PC-9 (cell line): ENCODE measurements at regions of chr12 and their contacts with region 1.

Region 1: GRCh38 chr12:93569656-93570551 is 2.6 kb upstream of the SOCS2 start:
- DNase-seq: peak; percentile 79 to 83
- H3K4me3 ChIP-seq: peak overlapping the region; percentile 94
- H3K27ac ChIP-seq: peak overlapping the region; percentile 80
- H3K4me1 ChIP-seq: peaks cover 2% of the 10 kb centered on the region
- H3K27me3 ChIP-seq: no peaks in the 10 kb centered on the region
- CTCF ChIP-seq: peak; percentile 87

Region 2: GRCh38 chr12:93624595-93625294 is 54.8 kb after region 1 on chr12:
- CTCF ChIA-PET with region 1: no interaction called
- POLR2A ChIA-PET with region 1: no interaction called
- intact Hi-C with region 1: loop called (anchors 5 kb)
- DNase-seq: peak; percentile 24 to 95
- H3K4me3 ChIP-seq: no peak overlapping the region
- H3K27ac ChIP-seq: peak overlapping the region; percentile 94
- H3K4me1 ChIP-seq: peaks cover 26% of the 10 kb centered on the region
- H3K27me3 ChIP-seq: no peaks in the 10 kb centered on the region
- CTCF ChIP-seq: no peak

Region 3: DNA sequence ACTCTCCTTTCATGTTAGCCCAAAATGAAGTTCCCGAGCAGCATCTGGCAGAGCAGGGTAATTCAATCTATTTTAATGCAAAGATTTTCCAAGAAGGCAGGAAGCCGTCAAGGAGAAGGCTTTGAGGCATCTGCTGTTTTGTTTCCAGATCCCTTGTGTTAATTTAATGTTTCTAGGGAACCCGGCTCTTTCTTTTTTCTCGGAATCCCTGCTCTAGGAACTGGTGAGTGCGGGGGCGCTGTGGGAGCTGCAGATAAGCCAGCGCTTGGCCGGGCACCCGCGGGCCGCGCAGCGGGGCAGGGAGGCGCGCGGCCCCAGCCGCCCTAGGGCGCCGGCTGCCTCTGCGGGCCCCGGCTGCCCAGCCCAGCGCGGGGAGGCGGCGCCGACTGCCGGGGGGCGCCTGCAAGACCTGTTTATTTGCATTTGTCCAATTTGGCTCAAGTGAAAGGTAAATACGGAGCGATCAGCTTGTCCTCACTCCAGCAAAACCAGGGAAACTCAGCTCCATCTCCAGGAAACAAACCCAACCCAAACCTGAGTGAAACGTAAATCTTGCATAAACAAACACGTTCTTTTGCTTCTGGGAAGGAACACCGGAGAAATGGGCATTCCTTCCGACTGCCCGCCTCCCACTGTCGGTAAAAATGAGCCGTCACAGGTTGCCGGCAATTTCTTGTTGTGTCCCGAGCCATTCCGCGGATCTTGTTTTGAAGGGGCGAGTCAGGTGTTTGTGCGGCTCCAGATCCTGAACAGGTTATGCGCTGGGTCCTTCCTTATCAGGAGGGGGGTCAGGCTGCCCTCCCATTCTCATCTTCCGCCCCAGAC is 172.4 kb after region 1 on chr12:
- CTCF ChIA-PET with region 1: interaction called, 4 read pairs
- POLR2A ChIA-PET with region 1: no interaction called
- intact Hi-C with region 1: loop called (anchors 1 kb)
- DNase-seq: peak; percentile 72 to 73
- H3K4me3 ChIP-seq: peak overlapping the region; percentile 71
- H3K27ac ChIP-seq: peak overlapping the region; percentile 53
- H3K4me1 ChIP-seq: peaks cover 18% of the 10 kb centered on the region
- H3K27me3 ChIP-seq: no peaks in the 10 kb centered on the region
- CTCF ChIP-seq: peak; percentile 46; the same call in 1 of the 2 replicates

Region 4: GRCh38 chr12:93886533-93887511 is 316.9 kb after region 1 on chr12:
- CTCF ChIA-PET with region 1: no interaction called
- POLR2A ChIA-PET with region 1: no interaction called
- intact Hi-C with region 1: loop called (anchors 5 kb)
- DNase-seq: no peak
- H3K4me3 ChIP-seq: no peak overlapping the region
- H3K27ac ChIP-seq: no peak overlapping the region
- H3K4me1 ChIP-seq: peaks cover 8% of the 10 kb centered on the region
- H3K27me3 ChIP-seq: no peaks in the 10 kb centered on the region
- CTCF ChIP-seq: no peak

Region 5: DNA sequence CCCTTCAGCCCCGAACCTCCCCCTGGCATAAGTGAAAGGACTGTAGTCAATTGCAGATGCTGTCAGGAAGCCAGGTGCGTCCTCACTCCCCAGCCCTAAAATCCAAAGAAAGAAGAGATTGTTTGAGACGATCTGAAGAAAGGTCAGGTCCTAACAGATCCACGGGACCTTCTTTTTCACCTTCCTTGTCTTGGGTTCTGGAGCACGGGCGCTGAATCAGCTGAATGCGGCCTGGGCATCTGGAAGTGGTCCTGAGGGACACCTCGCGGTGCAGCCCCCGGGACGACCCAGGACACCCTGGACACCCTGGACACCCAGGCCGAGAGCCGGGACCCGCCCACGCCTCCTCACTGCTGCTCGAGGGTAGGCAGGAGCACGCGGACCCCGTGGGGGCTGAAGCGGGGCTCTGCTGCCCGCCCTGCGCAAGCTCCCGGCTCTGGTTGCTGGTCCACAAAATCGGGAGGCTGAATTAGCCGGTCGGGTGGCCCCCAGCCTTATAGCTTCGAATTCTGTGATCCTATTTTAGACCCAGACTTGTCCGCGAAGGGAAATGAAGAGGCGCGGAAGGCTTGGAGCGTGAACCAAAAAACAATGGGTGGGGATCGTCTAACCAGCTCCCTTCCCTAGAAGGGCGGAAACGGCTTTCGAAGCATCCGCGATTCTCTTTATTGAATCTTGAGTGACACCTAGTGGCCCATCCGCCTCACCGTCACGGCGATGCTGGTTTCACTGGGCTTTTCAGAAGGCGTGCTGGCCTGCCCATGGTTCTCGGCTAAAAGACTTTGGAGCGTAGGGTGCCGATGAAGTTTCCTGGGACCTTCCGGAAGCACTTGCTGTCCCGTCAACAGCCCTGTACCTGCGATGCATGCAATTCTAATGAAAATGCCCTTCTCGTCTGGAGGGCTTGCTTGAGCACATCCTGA is 532.1 kb after region 1 on chr12:
- CTCF ChIA-PET with region 1: interaction called, 15 read pairs
- POLR2A ChIA-PET with region 1: interaction called, 3 read pairs
- intact Hi-C with region 1: loop called (anchors 1 kb)
- DNase-seq: peak; percentile 69 to 75
- H3K4me3 ChIP-seq: peak overlapping the region; percentile 59; the same call in 1 of the 2 replicates
- H3K27ac ChIP-seq: no peak overlapping the region
- H3K4me1 ChIP-seq: peaks cover 41% of the 10 kb centered on the region
- H3K27me3 ChIP-seq: no peaks in the 10 kb centered on the region
- CTCF ChIP-seq: peak; percentile 78